ENCODE measurements at regions of chr2 and their contacts with region 1.

Region 1: DNA sequence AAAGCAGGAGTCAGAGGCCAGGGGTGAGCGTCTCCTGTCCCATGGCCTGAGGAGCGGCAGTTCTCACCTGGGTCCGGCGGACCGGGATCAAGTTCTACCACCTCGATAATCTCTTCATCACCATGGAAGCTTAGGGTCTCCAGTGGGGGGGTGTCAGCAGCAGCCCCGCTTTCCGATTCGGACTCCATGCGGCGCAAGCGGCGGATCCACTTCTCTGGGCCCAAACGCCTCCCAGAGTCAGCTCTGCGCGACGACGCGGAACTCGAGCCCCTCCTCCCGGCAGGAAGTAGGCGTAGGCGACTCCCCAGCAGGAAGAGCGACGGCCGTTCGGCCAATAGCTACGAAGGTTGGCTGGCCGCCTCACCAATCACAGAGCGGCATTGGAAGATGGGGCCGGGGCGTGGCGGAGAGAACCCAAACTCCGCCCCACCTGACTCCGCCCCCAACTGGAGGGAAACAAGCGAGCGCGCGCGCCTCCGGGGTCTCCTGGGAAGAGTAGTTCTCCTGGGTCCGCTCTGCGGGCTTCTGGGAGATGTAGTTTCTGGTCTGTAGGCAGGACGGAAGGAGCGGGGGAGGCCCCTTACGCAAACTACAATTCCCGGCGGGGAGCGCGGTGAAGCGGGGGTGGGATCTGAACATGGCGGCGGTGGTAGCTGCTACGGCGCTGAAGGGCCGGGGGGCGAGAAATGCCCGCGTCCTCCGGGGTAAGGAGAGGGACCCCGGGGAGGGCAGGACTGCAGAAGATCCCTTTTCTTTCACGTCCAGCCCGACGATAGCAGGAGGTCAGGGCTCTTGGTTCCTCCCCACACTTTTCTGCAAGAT is at the starts of genes AAMP and PNKD:
- DNase-seq: peak; percentile 100
- ATAC-seq: peak; percentile 83
- H3K4me3 ChIP-seq: peak within 1 kb of the TSS; percentile 69 to 99 (median 97)
- H3K4me3 Mint-ChIP-seq: peak within 1 kb of the TSS; percentile 84
- H3K27ac ChIP-seq: peak within 1 kb of the TSS; percentile 49 to 82
- H3K27ac Mint-ChIP-seq: peak within 1 kb of the TSS; percentile 86
- H3K4me1 ChIP-seq: peaks cover 36 to 53% of the 10 kb centered on the region in 2 donors
- H3K4me1 Mint-ChIP-seq: peaks cover 59% of the 10 kb centered on the region
- H3K27me3 ChIP-seq: no peaks in the 10 kb centered on the region
- H3K27me3 Mint-ChIP-seq: no peaks in the 10 kb centered on the region
- CTCF ChIP-seq: no peak
- total RNA-seq, gene AAMP: 62.7 and 65.7 TPM in 2 replicates
- total RNA-seq, gene PNKD: 29.7 and 30.7 TPM in 2 replicates

Region 2: GRCh38 chr2:217756375-217757107 is 513.6 kb before region 1 on chr2:
- CTCF ChIA-PET with region 1: no interaction called
- POLR2A ChIA-PET with region 1: no interaction called
- intact Hi-C with region 1: no loop called
- DNase-seq: peak; percentile 52
- ATAC-seq: peak; percentile 49
- H3K4me3 ChIP-seq: no peak overlapping the region
- H3K4me3 Mint-ChIP-seq: peak overlapping the region; percentile 16
- H3K27ac ChIP-seq: no peak overlapping the region
- H3K27ac Mint-ChIP-seq: no peak overlapping the region
- H3K4me1 ChIP-seq: peaks cover 6% of the 10 kb centered on the region in 2 donors
- H3K4me1 Mint-ChIP-seq: peaks cover 9% of the 10 kb centered on the region
- H3K27me3 ChIP-seq: peaks cover 0 to 25% (median 12%) of the 10 kb centered on the region in 4 experiments
- H3K27me3 Mint-ChIP-seq: peaks cover 40% of the 10 kb centered on the region
- CTCF ChIP-seq: peak; percentile 73

Region 3: GRCh38 chr2:217836901-217837491 is 433.1 kb before region 1 on chr2:
- CTCF ChIA-PET with region 1: no interaction called
- POLR2A ChIA-PET with region 1: no interaction called
- intact Hi-C with region 1: no loop called
- DNase-seq: no peak
- ATAC-seq: no peak
- H3K4me3 ChIP-seq: no peak overlapping the region
- H3K4me3 Mint-ChIP-seq: no peak overlapping the region
- H3K27ac ChIP-seq: no peak overlapping the region
- H3K27ac Mint-ChIP-seq: no peak overlapping the region
- H3K4me1 ChIP-seq: no peaks in the 10 kb centered on the region
- H3K4me1 Mint-ChIP-seq: no peaks in the 10 kb centered on the region
- H3K27me3 ChIP-seq: peaks cover 0 to 3% (median 0%) of the 10 kb centered on the region in 4 experiments
- H3K27me3 Mint-ChIP-seq: peaks cover 10% of the 10 kb centered on the region
- CTCF ChIP-seq: no peak

Region 4: DNA sequence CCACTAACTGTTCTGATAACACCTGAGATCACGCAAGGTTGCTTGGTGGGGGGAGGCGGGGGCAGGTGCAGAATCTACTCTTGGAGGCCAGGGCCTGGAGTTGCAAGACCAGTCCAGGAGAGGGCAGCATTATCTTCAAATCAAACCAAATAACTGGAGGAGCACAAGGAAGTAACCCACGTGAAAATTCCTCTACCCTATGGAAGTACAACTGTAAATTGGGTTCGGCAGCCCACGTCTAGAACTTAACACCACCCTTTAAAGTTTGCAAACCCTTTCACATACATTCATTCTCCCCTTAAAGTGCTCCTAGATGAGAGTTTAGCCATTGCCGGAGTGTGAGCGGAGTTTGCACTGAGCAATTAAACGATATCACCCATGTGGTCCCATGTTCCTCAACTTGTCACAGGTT is 83.7 kb before region 1 on chr2:
- CTCF ChIA-PET with region 1: interaction called, 10 read pairs
- POLR2A ChIA-PET with region 1: interaction called, 11 read pairs
- intact Hi-C with region 1: loop called (anchors 1 kb)
- DNase-seq: peak; percentile 82
- ATAC-seq: peak; percentile 91
- H3K4me3 ChIP-seq: no peak overlapping the region
- H3K4me3 Mint-ChIP-seq: no peak overlapping the region
- H3K27ac ChIP-seq: no peak overlapping the region
- H3K27ac Mint-ChIP-seq: peak overlapping the region; percentile 26
- H3K4me1 ChIP-seq: peaks cover 2 to 7% of the 10 kb centered on the region in 2 donors
- H3K4me1 Mint-ChIP-seq: peaks cover 6% of the 10 kb centered on the region
- H3K27me3 ChIP-seq: peaks cover 0 to 8% (median 2%) of the 10 kb centered on the region in 4 experiments
- H3K27me3 Mint-ChIP-seq: peaks cover 7% of the 10 kb centered on the region
- CTCF ChIP-seq: peak; percentile 88

Region 5: DNA sequence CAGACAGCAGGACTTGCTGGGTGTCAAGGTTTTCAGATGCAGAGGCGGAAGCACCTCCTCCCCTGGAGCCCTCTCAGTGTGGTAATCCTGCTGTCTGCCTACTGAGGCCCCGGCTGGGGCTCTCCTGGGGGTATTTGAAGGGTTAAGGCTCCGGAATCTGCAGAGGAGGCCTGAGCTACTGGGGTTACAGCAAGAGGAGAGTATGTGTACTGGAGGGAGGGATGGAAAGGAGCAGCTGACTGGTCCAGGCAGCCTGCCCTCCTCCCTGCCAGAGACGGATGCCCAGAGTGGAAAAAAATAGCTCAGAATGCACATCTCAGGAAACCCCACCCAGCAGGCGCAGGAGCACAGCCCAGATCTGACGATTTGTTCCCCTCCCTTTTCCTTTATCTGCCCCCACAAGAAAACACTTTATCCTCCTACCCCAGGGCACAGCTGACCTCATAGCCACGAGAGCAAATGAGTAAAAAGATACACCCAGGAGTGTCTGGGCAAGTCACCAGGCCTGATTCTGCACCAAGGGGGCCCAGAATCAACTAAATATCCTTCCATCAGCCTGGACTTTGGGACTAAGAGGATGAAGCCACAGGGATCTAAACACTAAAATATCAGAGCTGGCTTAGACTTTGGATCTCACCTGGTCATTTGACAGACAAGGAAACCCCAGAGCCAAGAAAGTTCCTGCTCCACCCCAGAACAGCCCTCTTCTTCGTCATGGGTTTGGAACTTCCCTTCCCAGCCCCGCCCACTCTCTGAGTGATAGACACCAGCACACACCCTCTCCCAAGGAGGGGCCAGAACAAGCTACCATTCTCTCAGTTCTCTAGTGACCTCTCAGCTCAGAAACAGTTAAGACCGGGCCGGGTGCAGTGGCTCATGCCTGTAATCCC is 16.7 kb after region 1 on chr2:
- CTCF ChIA-PET with region 1: interaction called, 331 read pairs
- POLR2A ChIA-PET with region 1: interaction called, 36 read pairs
- intact Hi-C with region 1: loop called (anchors 1 kb)
- DNase-seq: peak; percentile 94
- ATAC-seq: peak; percentile 56
- H3K4me3 ChIP-seq: peak overlapping the region; percentile 26 to 64 (median 54)
- H3K4me3 Mint-ChIP-seq: peak overlapping the region; percentile 86
- H3K27ac ChIP-seq: peak overlapping the region; percentile 97 to 99
- H3K27ac Mint-ChIP-seq: peak overlapping the region; percentile 96
- H3K4me1 ChIP-seq: peaks cover 79 to 98% of the 10 kb centered on the region in 2 donors
- H3K4me1 Mint-ChIP-seq: peaks cover 86% of the 10 kb centered on the region
- H3K27me3 ChIP-seq: no peaks in the 10 kb centered on the region
- H3K27me3 Mint-ChIP-seq: no peaks in the 10 kb centered on the region
- CTCF ChIP-seq: no peak

Region 6: GRCh38 chr2:218322895-218323808 is 53.0 kb after region 1 on chr2:
- CTCF ChIA-PET with region 1: interaction called, 4 read pairs
- POLR2A ChIA-PET with region 1: interaction called, 3 read pairs
- intact Hi-C with region 1: loop called (anchors 2 kb)
- DNase-seq: peak; percentile 74
- ATAC-seq: peak; percentile 79
- H3K4me3 ChIP-seq: peak overlapping the region in 4 of 5 experiments; percentile 31 to 63 (median 58)
- H3K4me3 Mint-ChIP-seq: peak overlapping the region; percentile 85
- H3K27ac ChIP-seq: peak overlapping the region in 1 of 2 donors; percentile 38
- H3K27ac Mint-ChIP-seq: peak overlapping the region; percentile 41
- H3K4me1 ChIP-seq: peaks cover 34 to 40% of the 10 kb centered on the region in 2 donors
- H3K4me1 Mint-ChIP-seq: peaks cover 41% of the 10 kb centered on the region
- H3K27me3 ChIP-seq: peaks cover 0 to 11% (median 5%) of the 10 kb centered on the region in 4 experiments
- H3K27me3 Mint-ChIP-seq: no peaks in the 10 kb centered on the region
- CTCF ChIP-seq: no peak

Region 7: DNA sequence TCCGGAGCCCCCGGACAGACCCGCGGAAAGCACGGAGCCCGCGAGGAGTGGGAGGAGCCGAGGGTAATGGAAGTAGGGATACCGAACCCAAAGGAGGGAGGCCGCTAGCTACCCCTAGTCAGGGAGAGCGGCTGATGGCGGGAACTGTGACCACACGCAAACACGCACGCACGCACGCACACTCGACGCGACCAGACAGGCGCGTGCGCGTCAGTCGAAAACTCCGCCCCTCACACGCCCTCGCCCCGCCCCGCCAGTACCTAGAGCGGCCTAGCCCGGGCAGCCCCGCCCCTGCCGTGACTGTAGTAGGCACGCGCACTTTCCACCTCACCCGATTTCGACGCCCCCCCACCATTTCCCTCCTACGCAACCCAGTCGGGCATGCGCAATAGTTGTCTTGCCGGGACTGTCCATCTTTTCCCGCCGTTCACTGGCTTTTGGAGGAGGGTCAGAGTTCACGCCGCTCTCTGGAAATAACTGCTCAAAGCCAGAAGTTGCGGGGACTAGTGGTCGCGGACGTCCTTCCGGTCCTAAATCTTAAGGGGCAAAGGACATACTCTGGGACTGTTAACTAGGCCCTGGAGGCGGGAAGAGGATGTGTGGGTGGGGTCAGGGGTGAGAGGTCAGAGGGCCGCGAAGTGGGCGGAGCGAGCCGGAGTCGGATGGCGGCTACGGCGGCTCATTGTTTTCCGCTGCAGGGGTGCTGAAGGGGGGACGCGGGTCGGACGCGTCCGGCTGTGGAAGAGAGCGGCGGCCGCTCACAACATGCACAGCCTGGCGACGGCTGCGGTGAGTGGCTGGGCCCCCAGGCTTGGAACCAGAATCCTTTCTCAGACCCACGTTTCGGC is 298.3 kb after region 1 on chr2 and contains the starts of genes CNOT9 and USP37:
- CTCF ChIA-PET with region 1: no interaction called
- POLR2A ChIA-PET with region 1: no interaction called
- intact Hi-C with region 1: loop called (anchors 1 kb)
- DNase-seq: peak; percentile 100
- ATAC-seq: peak; percentile 92
- H3K4me3 ChIP-seq: peak within 1 kb of the TSS; percentile 65 to 91 (median 84)
- H3K4me3 Mint-ChIP-seq: peak within 1 kb of the TSS; percentile 96
- H3K27ac ChIP-seq: peak within 1 kb of the TSS; percentile 93 to 95
- H3K27ac Mint-ChIP-seq: peak within 1 kb of the TSS; percentile 100
- H3K4me1 ChIP-seq: peaks cover 29 to 31% of the 10 kb centered on the region in 2 donors
- H3K4me1 Mint-ChIP-seq: peaks cover 56% of the 10 kb centered on the region
- H3K27me3 ChIP-seq: no peaks in the 10 kb centered on the region
- H3K27me3 Mint-ChIP-seq: no peaks in the 10 kb centered on the region
- CTCF ChIP-seq: no peak
- total RNA-seq, gene CNOT9: 54.5 and 66.9 TPM in 2 replicates
- total RNA-seq, gene USP37: 29.0 and 32.4 TPM in 2 replicates

Region 8: DNA sequence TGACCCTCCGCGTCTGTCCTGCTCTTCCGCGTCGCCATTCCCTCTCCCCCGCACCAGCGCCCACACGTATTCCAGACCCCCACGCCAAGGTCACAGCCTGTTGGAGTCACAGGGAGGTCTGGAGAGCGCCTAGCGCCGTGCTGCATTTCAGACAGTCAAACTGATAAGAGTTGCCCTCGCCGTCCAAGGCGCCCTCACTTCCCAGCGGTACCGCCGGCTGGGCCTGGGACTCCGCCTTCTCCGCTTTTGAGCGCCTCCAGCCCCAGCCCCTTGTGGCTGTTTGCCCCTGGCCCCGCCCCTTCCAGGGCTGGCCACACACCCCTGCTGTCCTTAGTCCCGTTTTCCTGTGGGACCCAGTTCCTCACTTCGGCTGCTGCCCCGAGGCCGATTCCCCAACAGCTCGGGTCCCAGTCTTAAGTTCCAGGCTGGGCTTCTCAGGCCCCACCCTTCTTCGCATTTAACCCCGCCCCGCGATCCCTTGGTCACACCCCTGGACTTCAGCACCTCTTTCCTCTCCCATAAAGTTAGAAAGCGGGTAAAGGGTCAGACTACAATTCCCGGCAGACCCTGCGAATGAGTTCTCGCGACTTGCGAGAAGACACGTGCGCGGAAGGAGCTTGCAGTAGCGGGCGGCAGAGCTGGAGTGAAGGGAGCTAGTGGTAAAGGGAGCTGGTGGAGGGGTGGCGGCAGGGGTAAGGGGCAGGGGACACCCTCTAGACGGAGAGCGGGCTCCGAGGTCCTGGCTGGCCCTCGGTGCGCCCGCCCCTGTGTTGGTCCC is 1228.4 kb after region 1 on chr2 and contains the start of gene GMPPA:
- CTCF ChIA-PET with region 1: no interaction called
- POLR2A ChIA-PET with region 1: no interaction called
- intact Hi-C with region 1: loop called (anchors 5 kb)
- DNase-seq: peak; percentile 94
- ATAC-seq: peak; percentile 96
- H3K4me3 ChIP-seq: peak within 1 kb of the TSS; percentile 65 to 90 (median 79)
- H3K4me3 Mint-ChIP-seq: peak within 1 kb of the TSS; percentile 93
- H3K27ac ChIP-seq: peak within 1 kb of the TSS in 1 of 2 donors; percentile 84
- H3K27ac Mint-ChIP-seq: peak within 1 kb of the TSS; percentile 87
- H3K4me1 ChIP-seq: peaks cover 38% of the 10 kb centered on the region in 2 donors
- H3K4me1 Mint-ChIP-seq: peaks cover 32% of the 10 kb centered on the region
- H3K27me3 ChIP-seq: peaks cover 0 to 46% (median 23%) of the 10 kb centered on the region in 4 experiments
- H3K27me3 Mint-ChIP-seq: peaks cover 33% of the 10 kb centered on the region
- CTCF ChIP-seq: no peak
- total RNA-seq, gene GMPPA: 27.8 and 32.0 TPM in 2 replicates

Measured in B cell (primary cell).